Activated T-helper 1 cell treated with anti-CD3 and anti-CD28 coated beads, Interleukin-12 subunit alpha, Interleukin-12 subunit beta, Interleukin-2, Interleukin-4 antibody, amounts not matched to agents 30 ng/mL and 10 ng/mL and 1 ng/mL, durations not matched to agents 14 hours and 24 hours and 36 hours (primary cell): ENCODE measurements at regions of chr9 and their contacts with region 1.

Region 1: GRCh38 chr9:35646533-35647265 is 4.0 kb downstream of the SIT1 start:
- DNase-seq: peak; percentile 91
- H3K4me3 Mint-ChIP-seq: peak overlapping the region; percentile 92
- H3K27ac Mint-ChIP-seq: peak overlapping the region; percentile 93
- H3K4me1 Mint-ChIP-seq: peaks cover 49% of the 10 kb centered on the region
- H3K27me3 Mint-ChIP-seq: peaks cover 1% of the 10 kb centered on the region

Region 2: GRCh38 chr9:35489313-35490154 is 157.2 kb before region 1 on chr9 and contains the start of gene RUSC2:
- intact Hi-C with region 1: loop called (anchors 2 kb)
- DNase-seq: peak; percentile 51
- H3K4me3 Mint-ChIP-seq: peak within 1 kb of the TSS; percentile 88
- H3K27ac Mint-ChIP-seq: peak within 1 kb of the TSS; percentile 63
- H3K4me1 Mint-ChIP-seq: peaks cover 35% of the 10 kb centered on the region
- H3K27me3 Mint-ChIP-seq: peaks cover 14% of the 10 kb centered on the region
- total RNA-seq, gene RUSC2: 4.4 and 5.8 TPM in 2 replicates

Region 3: DNA sequence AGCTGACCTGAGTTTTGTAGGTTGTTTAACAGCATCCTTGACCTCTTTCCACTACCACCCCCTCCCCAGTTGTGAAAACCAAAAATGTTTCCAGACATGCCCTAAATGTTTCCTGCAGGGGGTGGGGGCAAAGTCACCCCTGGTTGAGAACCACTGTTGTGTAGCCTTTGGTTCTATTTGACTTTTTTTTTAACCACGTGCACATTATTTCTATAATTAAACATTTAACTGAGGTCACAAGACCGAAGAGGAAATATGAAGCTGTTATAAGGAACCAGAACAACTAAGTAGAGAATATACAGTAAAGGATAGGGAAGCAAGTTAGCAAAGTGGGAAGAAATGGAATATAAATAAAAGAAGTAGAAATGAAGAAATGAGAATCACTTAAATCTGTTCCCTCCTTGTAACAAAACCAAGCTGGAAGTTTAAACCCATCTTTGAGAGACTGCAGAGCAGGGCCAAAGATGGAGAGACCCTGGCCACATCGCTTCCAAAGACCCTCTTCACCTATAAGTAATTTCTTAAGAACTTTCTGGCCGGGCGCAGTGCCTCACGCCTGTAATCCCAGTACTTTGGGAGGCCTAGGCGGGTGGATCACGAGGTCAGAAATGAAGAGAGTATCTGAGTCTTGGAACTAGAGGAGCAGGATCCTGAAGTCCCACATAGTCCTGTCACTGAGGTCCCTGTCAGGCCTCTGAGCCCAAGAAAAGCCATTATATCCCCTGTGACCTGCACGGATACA is 10.4 kb before region 1 on chr9:
- intact Hi-C with region 1: loop called (anchors 1 kb)
- DNase-seq: no peak
- H3K4me3 Mint-ChIP-seq: no peak overlapping the region
- H3K27ac Mint-ChIP-seq: peak overlapping the region; percentile 80
- H3K4me1 Mint-ChIP-seq: peaks cover 60% of the 10 kb centered on the region
- H3K27me3 Mint-ChIP-seq: no peaks in the 10 kb centered on the region

Region 4: DNA sequence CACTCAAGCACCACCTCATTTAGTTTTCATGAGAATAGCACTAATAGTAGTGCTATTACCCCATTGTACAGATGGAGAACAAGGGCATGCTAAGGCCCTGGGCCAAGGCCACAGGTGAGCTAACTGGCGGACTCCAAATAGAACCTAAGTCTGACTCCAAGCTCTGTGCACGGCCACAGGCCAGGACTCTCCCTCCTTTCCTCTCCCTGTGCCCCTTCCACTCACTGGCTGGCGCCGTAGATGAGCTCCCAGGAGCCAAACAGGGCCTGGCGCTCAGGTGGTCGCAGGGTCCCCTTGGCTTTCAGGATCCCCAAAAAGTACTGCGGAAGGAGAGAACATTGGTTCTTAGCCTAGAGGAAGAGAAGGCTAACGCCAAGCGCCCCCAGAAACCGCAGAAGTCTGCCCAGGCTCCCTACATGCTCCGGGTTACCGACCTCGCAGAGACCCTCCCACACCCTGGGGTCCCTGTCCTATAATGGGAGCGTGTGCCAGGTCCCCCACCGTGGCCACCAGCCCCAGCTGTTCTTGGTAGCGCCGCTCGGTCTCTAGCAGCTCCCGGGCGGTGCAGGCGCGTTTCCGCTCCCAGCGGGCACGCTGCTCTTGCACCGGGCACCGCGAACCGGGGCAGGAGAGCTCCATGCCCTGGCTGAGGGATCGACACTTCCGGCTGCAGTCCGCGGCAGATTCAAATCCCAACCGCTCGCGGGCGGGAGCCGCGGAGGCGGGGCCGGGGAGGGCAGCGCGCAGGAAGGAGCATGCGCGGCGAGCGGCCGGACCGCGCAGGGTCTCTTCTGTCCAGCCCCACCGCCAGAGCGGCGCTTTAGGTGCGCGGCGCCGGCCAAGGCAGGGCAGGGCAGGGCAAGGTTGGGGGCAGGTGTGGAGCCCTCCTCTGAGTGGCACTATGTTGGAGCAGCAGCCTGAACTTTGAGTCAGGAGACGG is 18.1 kb after region 1 on chr9 and contains the start of gene ARHGEF39:
- intact Hi-C with region 1: loop called (anchors 2 kb)
- DNase-seq: peak; percentile 76
- H3K4me3 Mint-ChIP-seq: peak within 1 kb of the TSS; percentile 88
- H3K27ac Mint-ChIP-seq: peak within 1 kb of the TSS; percentile 79
- H3K4me1 Mint-ChIP-seq: peaks cover 53% of the 10 kb centered on the region
- H3K27me3 Mint-ChIP-seq: no peaks in the 10 kb centered on the region
- total RNA-seq, gene ARHGEF39: 7.9 and 8.8 TPM in 2 replicates